ENCODE measurements at regions of chr12 and their contacts with region 1.

Region 1: GRCh38 chr12:85029456-85029855 is 6.6 kb downstream of the TSPAN19 start:
- DNase-seq: peak; percentile 64
- H3K4me3 ChIP-seq: no peak overlapping the region
- H3K27ac ChIP-seq: no peak overlapping the region
- H3K4me1 ChIP-seq: no peaks in the 10 kb centered on the region
- H3K27me3 ChIP-seq: no peaks in the 10 kb centered on the region
- CTCF ChIP-seq: peak; percentile 61

Region 2: DNA sequence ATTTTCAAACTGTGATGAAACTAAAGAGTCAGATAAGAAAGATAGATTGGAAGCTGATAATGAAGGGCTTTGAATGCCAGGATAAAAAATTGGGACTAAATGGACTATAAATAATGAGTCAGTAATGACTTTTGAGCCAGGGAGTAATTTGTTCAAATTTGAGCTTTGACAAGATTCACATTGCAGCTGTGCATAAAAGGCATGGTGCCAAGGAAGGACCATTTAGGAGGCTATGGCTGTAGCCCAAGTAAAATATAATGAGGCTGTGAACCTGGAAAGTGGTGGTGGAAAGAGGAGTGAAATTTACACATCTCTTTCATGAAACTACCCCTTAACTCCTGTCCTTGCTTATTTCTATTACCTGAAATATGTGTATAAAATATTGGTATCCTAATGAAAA is 335.3 kb before region 1 on chr12:
- CTCF ChIA-PET with region 1: no interaction called
- POLR2A ChIA-PET with region 1: no interaction called
- intact Hi-C with region 1: no loop called
- DNase-seq: peak; percentile 16
- H3K4me3 ChIP-seq: no peak overlapping the region
- H3K27ac ChIP-seq: no peak overlapping the region
- H3K4me1 ChIP-seq: peaks cover 14% of the 10 kb centered on the region
- H3K27me3 ChIP-seq: no peaks in the 10 kb centered on the region
- CTCF ChIP-seq: no peak

Region 3: GRCh38 chr12:84874125-84874824 is 155.2 kb before region 1 on chr12:
- CTCF ChIA-PET with region 1: interaction called, 10 read pairs
- POLR2A ChIA-PET with region 1: no interaction called
- intact Hi-C with region 1: loop called (anchors 1 kb)
- DNase-seq: peak; percentile 68
- H3K4me3 ChIP-seq: no peak overlapping the region
- H3K27ac ChIP-seq: no peak overlapping the region
- H3K4me1 ChIP-seq: no peaks in the 10 kb centered on the region
- H3K27me3 ChIP-seq: no peaks in the 10 kb centered on the region
- CTCF ChIP-seq: peak; percentile 80

Region 4: GRCh38 chr12:84911331-84912197 is 117.9 kb before region 1 on chr12:
- CTCF ChIA-PET with region 1: no interaction called
- POLR2A ChIA-PET with region 1: no interaction called
- intact Hi-C with region 1: loop called (anchors 1 kb)
- DNase-seq: peak; percentile 84
- H3K4me3 ChIP-seq: peak overlapping the region; percentile 52
- H3K27ac ChIP-seq: no peak overlapping the region
- H3K4me1 ChIP-seq: no peaks in the 10 kb centered on the region
- H3K27me3 ChIP-seq: peaks cover 7% of the 10 kb centered on the region
- CTCF ChIP-seq: no peak